ENCODE measurements at regions of chr4 and their contacts with region 1.

Region 1: DNA sequence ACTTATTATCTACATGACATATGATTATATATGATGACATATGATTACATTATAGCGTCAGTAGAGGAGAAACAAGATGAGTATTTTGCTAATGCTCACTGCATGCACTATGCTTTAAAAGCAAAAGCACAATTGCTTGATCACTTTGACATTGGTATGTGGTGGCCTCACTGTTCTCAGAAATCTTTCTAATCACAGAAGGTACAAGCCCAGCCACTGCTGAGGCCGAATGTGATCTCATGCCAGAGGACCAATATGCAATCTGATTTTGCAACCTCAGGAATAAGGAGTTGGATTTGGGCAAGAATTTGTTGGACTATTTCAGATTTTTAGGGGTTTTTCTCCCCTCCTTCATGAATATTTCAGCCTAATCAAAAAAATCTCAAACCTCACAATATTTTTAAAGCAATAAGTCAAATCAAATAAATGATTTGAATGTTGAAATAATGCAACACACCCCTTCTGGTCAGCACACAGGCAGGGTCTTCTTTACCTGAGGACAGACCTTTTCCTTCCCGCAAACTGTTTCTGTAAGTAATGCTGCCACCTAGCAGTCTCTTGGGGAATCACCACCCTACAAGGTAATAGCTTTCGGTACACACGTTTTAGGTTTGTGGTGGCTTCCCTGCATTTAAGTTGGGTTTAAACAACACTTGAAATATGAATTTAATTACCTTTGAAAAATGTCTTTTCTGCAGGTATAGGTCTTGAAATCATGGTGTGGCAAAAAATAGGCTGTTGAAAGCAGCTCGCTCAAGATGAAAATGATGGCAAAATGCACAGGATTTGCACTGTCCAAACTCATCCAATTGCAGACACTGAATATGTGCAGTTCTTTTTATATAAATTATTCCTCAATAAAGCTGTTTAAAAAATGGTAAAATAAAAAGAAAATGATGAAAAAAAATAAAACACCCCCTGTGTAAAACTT is 4.8 kb upstream of the CXCL13 start:
- DNase-seq: no peak
- H3K4me3 ChIP-seq: no peak overlapping the region
- H3K27me3 ChIP-seq: peaks cover 6% of the 10 kb centered on the region
- CTCF ChIP-seq: peak; percentile 87

Region 2: GRCh38 chr4:77385124-77385969 is 215.4 kb before region 1 on chr4:
- CTCF ChIA-PET with region 1: interaction called, 95 read pairs
- POLR2A ChIA-PET with region 1: no interaction called
- DNase-seq: no peak
- H3K4me3 ChIP-seq: no peak overlapping the region
- H3K27me3 ChIP-seq: peaks cover 3% of the 10 kb centered on the region; the same call in 1 of the 2 replicates
- CTCF ChIP-seq: peak; percentile 85

Region 3: DNA sequence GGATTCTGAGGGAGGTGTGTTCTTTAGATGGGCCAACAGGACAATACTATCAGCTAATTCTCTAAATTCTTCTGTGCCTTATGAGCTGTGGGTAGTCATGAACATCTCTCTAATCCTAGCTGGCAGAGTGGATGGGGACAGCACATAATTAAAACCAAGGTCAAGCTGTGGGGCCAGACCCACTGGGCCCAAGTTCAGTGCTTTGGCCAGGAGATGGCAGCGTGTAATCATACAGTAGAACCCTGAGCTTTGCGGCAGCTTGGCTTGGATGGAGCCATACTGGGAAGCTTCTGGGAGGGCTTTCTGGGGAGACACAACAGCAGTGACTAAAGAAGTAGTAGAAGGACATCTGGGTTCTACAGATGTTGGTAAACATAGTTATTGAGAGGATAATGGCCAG is 135.5 kb before region 1 on chr4:
- CTCF ChIA-PET with region 1: interaction called, 73 read pairs
- POLR2A ChIA-PET with region 1: no interaction called
- DNase-seq: no peak
- H3K4me3 ChIP-seq: no peak overlapping the region
- H3K27me3 ChIP-seq: no peaks in the 10 kb centered on the region
- CTCF ChIP-seq: peak; percentile 47

Region 4: GRCh38 chr4:77505275-77505957 is 95.4 kb before region 1 on chr4:
- CTCF ChIA-PET with region 1: no interaction called
- POLR2A ChIA-PET with region 1: no interaction called
- DNase-seq: no peak
- H3K4me3 ChIP-seq: no peak overlapping the region
- H3K27me3 ChIP-seq: no peaks in the 10 kb centered on the region; the same call in 1 of the 2 replicates
- CTCF ChIP-seq: no peak

Region 5: GRCh38 chr4:77576351-77576750 is 24.4 kb before region 1 on chr4:
- CTCF ChIA-PET with region 1: interaction called, 12 read pairs
- POLR2A ChIA-PET with region 1: no interaction called
- DNase-seq: no peak
- H3K4me3 ChIP-seq: no peak overlapping the region
- H3K27me3 ChIP-seq: no peaks in the 10 kb centered on the region
- CTCF ChIP-seq: no peak

Region 6: GRCh38 chr4:77618383-77619122 is 17.8 kb after region 1 on chr4:
- CTCF ChIA-PET with region 1: interaction called, 11 read pairs
- POLR2A ChIA-PET with region 1: interaction called, 3 read pairs
- DNase-seq: peak; percentile 5
- H3K4me3 ChIP-seq: no peak overlapping the region
- H3K27me3 ChIP-seq: peaks cover 15% of the 10 kb centered on the region
- CTCF ChIP-seq: peak; percentile 90

Region 7: DNA sequence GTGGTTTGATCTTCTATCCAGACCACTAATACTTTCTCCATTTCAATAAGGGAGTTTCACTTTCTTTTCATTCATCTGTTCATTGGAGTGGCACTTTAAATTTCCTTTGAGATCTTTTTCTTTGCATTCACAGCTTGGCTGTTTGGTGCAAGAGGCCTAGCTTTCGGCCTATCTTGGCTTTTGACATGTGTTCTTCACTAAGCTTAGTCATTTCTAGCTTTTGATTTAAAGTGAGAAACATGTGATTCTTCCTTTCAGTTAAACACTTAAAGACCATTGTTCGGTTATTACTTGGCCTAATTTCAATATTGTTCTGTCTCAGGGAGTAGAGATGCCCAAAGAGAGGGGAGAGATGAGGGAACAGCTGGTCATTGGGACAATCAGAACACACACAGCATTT is 29.1 kb after region 1 on chr4:
- CTCF ChIA-PET with region 1: interaction called, 12 read pairs
- POLR2A ChIA-PET with region 1: no interaction called
- DNase-seq: no peak
- H3K4me3 ChIP-seq: no peak overlapping the region
- H3K27me3 ChIP-seq: peaks cover 3% of the 10 kb centered on the region; the same call in 1 of the 2 replicates
- CTCF ChIP-seq: no peak

Region 8: GRCh38 chr4:78014889-78015885 is 414.4 kb after region 1 on chr4:
- CTCF ChIA-PET with region 1: no interaction called
- POLR2A ChIA-PET with region 1: no interaction called
- DNase-seq: no peak
- H3K4me3 ChIP-seq: no peak overlapping the region
- H3K27me3 ChIP-seq: no peaks in the 10 kb centered on the region
- CTCF ChIP-seq: no peak